AG04449 (cell line): ENCODE measurements at regions of chr2 and their contacts with region 1.

Region 1: DNA sequence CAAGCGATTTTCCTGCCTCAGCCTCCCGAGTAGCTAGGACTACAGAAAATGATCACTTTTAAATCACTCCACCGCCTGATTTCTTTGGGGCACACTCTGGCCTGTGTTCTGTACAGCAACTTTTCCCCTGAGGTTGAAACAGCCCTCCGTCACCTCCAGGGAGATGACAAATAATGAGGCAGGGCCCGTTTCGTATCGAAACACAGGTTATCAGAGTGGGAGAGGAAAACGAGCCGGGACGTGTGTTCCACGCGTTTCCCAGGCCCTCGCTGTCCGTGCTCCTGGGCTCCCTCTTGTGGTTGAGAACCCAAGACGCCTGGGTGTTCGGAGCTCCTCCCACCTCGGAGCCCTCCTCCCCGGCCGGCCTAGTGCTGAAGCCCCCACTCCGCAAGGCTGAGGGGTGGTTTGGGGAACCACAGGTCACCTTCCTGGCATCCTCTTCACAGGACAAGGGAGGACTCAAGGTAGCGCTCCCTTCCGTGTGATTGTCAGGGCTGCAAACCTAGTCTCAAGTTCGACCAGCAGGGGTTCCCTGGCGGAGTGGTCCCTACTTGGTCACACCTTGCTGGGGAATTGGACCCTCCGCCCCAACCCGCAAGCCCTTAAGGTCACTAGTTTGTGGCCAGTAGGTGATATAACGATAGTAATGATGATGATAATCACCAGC is 12.8 kb downstream of the ATP6V1B1 start:
- DNase-seq: no peak
- H3K4me3 ChIP-seq: peak overlapping the region; percentile 48
- CTCF ChIP-seq: peak; percentile 92

Region 2: GRCh38 chr2:70851704-70852103 is 96.8 kb before region 1 on chr2:
- CTCF ChIA-PET with region 1: interaction called, 28 read pairs
- POLR2A ChIA-PET with region 1: no interaction called
- DNase-seq: no peak
- H3K4me3 ChIP-seq: no peak overlapping the region
- CTCF ChIP-seq: no peak

Region 3: GRCh38 chr2:70871398-70872211 is 76.9 kb before region 1 on chr2:
- CTCF ChIA-PET with region 1: interaction called, 299 read pairs
- POLR2A ChIA-PET with region 1: interaction called, 3 read pairs
- DNase-seq: no peak
- H3K4me3 ChIP-seq: no peak overlapping the region
- CTCF ChIP-seq: peak; percentile 99

Region 4: GRCh38 chr2:70907130-70908057 is 41.1 kb before region 1 on chr2:
- CTCF ChIA-PET with region 1: interaction called, 64 read pairs
- POLR2A ChIA-PET with region 1: no interaction called
- DNase-seq: no peak
- H3K4me3 ChIP-seq: no peak overlapping the region; the same call in 1 of the 2 replicates
- CTCF ChIP-seq: no peak

Region 5: GRCh38 chr2:70926042-70926441 is 22.4 kb before region 1 on chr2:
- CTCF ChIA-PET with region 1: interaction called, 43 read pairs
- POLR2A ChIA-PET with region 1: no interaction called
- DNase-seq: no peak
- H3K4me3 ChIP-seq: no peak overlapping the region
- CTCF ChIP-seq: no peak

Region 6: DNA sequence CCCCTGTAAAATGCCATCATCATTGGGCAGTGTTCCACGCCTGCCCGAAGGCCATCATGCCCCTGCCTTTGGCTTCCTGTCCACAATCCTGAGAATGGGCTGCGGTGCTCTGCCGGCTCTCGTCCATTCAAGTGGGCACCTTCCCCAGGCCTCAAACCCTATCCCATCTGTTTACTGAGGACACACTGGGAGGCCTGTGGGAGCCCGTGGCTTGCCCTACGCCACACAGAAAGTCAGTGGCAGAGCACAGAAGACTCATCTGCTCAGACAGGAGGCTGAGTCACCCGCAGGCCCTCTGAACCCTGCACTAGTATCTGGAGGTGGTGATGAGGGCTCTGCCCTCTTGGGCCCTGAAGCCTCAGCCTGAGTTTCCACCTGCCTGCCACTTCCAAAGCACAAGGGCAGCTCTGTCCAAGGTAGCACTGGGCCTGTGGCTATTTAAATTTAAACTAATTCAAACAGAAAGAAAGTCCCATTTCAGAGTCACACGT is 10.8 kb after region 1 on chr2:
- CTCF ChIA-PET with region 1: interaction called, 91 read pairs
- POLR2A ChIA-PET with region 1: no interaction called
- DNase-seq: no peak
- H3K4me3 ChIP-seq: no peak overlapping the region
- CTCF ChIP-seq: no peak

Region 7: DNA sequence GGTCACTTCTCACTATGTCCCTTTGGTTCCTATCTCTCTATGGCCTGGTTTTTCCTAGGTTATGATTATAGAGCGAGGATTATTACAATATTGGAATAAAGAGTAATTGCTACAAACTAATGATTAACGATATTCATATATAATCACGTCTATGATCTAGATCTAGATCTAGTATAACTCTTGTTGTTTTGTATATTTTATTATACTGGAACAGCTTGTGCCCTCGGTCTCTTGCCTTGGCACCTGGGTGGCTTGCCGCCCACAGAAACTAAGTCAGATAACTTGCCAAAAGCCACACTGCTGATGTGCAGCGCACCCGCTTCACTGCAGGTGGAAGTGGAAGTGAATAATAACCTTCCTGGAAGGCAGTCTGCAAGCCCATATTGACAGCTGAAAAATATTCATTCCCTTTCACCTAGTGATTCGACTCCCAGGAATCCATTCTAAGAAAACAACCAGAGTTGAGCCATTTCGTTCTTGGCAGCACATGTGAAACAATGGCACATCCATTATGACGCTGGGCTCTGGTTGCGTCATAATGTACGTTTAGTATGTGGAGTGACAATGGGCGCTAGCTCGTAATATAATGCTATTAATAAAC is 29.2 kb after region 1 on chr2:
- CTCF ChIA-PET with region 1: interaction called, 15 read pairs
- POLR2A ChIA-PET with region 1: no interaction called
- DNase-seq: peak; percentile 21
- H3K4me3 ChIP-seq: peak overlapping the region; percentile 61
- CTCF ChIP-seq: no peak